H1 (cell line): ENCODE measurements at regions of chr13 and their contacts with region 1.

Region 1: GRCh38 chr13:26668357-26669146 is 92.0 kb downstream of the GPR12 start:
- DNase-seq: no peak
- H3K4me3 ChIP-seq: no peak overlapping the region
- H3K27ac ChIP-seq: no peak overlapping the region
- H3K4me1 ChIP-seq: no peaks in the 10 kb centered on the region
- H3K27me3 ChIP-seq: no peaks in the 10 kb centered on the region
- CTCF ChIP-seq: no peak
- EP300 ChIP-seq: no peak
- POLR2A ChIP-seq: no peak
- RAD21 ChIP-seq: no peak

Region 2: GRCh38 chr13:26656919-26657318 is 11.6 kb before region 1 on chr13:
- CTCF ChIA-PET with region 1: interaction called, 19 read pairs
- POLR2A ChIA-PET with region 1: no interaction called
- DNase-seq: no peak
- H3K4me3 ChIP-seq: no peak overlapping the region
- H3K27ac ChIP-seq: no peak overlapping the region
- H3K4me1 ChIP-seq: peaks cover 0 to 9% (median 2%) of the 10 kb centered on the region in 4 experiments; a peak in 4 of 7 replicates
- H3K27me3 ChIP-seq: no peaks in the 10 kb centered on the region
- CTCF ChIP-seq: peak in 2 of 3 experiments; percentile 36 to 50; a peak in 2 of 4 replicates
- EP300 ChIP-seq: no peak
- POLR2A ChIP-seq: no peak
- RAD21 ChIP-seq: peak; percentile 26 to 49; a peak in 3 of 4 replicates